Activated CD4-positive, alpha-beta memory T cell treated with anti-CD3 and anti-CD28 coated beads for 36 hours (primary cell): ENCODE measurements at regions of chr1 and their contacts with region 1.

Region 1: DNA sequence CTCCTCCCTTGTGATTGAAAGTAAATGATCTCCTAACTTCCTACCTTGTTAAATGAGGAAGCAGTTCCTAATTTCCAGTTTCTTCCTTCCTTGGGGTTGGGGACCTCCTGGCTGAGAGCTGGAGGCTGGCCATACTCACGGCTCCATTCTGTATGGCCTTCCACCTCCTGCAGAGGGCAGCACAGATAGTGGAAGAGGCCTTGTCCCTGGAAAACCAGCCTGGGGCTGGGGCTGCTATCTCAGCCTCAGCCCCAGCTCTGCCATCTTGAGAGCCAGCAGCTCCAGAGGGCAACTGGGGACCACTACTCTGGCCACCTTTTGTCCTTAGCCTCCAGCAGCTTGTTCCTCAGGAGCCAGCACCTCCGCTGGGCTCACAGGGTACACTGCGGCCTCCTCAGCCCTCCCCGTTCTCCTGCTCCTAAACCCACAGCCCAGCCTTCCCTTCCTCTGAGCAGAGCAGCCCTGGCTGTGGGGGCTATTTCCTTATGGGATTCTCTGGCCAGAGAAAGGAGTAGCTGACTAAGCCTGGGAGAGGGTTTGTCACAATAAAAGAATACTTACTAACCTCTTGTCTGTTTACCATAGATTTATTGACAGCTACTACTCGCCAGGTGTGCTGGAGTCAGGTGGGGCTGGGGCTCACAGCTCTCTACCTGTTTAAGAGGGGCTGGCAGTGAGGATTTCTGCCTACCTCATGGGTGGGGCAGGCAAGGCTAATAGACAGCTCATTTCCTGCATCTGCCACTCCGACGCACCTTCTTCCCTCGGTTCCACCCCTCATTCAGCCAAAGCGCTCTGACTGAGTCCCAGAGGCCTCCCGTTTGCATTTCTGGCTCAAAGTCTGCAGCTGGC is 6.3 kb downstream of the TMEM234 start:
- DNase-seq: peak; percentile 74
- H3K4me3 Mint-ChIP-seq: no peak overlapping the region
- H3K27ac Mint-ChIP-seq: peak overlapping the region; percentile 8
- H3K4me1 Mint-ChIP-seq: peaks cover 14% of the 10 kb centered on the region
- H3K27me3 Mint-ChIP-seq: no peaks in the 10 kb centered on the region

Region 2: GRCh38 chr1:31904339-31905092 is 311.3 kb before region 1 on chr1:
- CTCF ChIA-PET with region 1: no interaction called
- POLR2A ChIA-PET with region 1: no interaction called
- intact Hi-C with region 1: no loop called
- DNase-seq: peak; percentile 28
- H3K4me3 Mint-ChIP-seq: no peak overlapping the region
- H3K27ac Mint-ChIP-seq: peak overlapping the region; percentile 8
- H3K4me1 Mint-ChIP-seq: peaks cover 13% of the 10 kb centered on the region
- H3K27me3 Mint-ChIP-seq: no peaks in the 10 kb centered on the region

Region 3: GRCh38 chr1:32013386-32014198 is 202.3 kb before region 1 on chr1 and contains the start of gene KHDRBS1:
- CTCF ChIA-PET with region 1: no interaction called
- POLR2A ChIA-PET with region 1: no interaction called
- intact Hi-C with region 1: no loop called
- DNase-seq: peak; percentile 99
- H3K4me3 Mint-ChIP-seq: peak within 1 kb of the TSS; percentile 96
- H3K27ac Mint-ChIP-seq: peak within 1 kb of the TSS; percentile 91
- H3K4me1 Mint-ChIP-seq: peaks cover 23% of the 10 kb centered on the region
- H3K27me3 Mint-ChIP-seq: peaks cover 2% of the 10 kb centered on the region
- total RNA-seq, gene KHDRBS1: 200 to 203 TPM

Region 4: DNA sequence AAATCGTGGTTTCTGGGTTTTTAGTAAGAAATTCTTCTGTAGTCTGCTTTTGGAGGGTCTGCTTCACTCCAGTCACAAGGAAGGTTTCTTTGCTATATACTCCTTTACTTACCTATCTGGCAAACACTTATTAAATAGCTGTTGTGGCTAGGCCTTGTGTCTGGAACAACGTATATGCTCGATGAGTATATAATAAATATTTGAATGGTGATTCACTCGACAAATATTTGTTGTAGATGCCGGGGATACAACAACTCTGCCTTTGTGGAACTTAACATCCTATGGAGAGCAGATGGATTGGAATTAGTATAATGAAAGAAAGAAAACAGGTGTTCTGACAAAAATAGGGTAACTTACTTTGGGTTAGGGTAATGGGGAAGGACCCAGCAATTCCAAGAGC is 76.9 kb before region 1 on chr1:
- CTCF ChIA-PET with region 1: no interaction called
- POLR2A ChIA-PET with region 1: no interaction called
- intact Hi-C with region 1: no loop called
- DNase-seq: no peak
- H3K4me3 Mint-ChIP-seq: no peak overlapping the region
- H3K27ac Mint-ChIP-seq: no peak overlapping the region
- H3K4me1 Mint-ChIP-seq: peaks cover 52% of the 10 kb centered on the region
- H3K27me3 Mint-ChIP-seq: no peaks in the 10 kb centered on the region

Region 5: GRCh38 chr1:32200226-32201010 is 15.4 kb before region 1 on chr1 and contains the start of gene CCDC28B:
- CTCF ChIA-PET with region 1: interaction called, 31 read pairs
- POLR2A ChIA-PET with region 1: interaction called, 19 read pairs
- intact Hi-C with region 1: no loop called
- DNase-seq: peak; percentile 67
- H3K4me3 Mint-ChIP-seq: peak within 1 kb of the TSS; percentile 81
- H3K27ac Mint-ChIP-seq: peak within 1 kb of the TSS; percentile 80
- H3K4me1 Mint-ChIP-seq: peaks cover 51% of the 10 kb centered on the region
- H3K27me3 Mint-ChIP-seq: no peaks in the 10 kb centered on the region
- total RNA-seq, gene CCDC28B: 13.4 to 14.8 TPM

Region 6: GRCh38 chr1:32240140-32240951 is 24.5 kb after region 1 on chr1:
- CTCF ChIA-PET with region 1: interaction called, 27 read pairs
- POLR2A ChIA-PET with region 1: no interaction called
- intact Hi-C with region 1: no loop called
- DNase-seq: peak; percentile 71
- H3K4me3 Mint-ChIP-seq: peak overlapping the region; percentile 78
- H3K27ac Mint-ChIP-seq: no peak overlapping the region
- H3K4me1 Mint-ChIP-seq: peaks cover 19% of the 10 kb centered on the region
- H3K27me3 Mint-ChIP-seq: no peaks in the 10 kb centered on the region

Region 7: DNA sequence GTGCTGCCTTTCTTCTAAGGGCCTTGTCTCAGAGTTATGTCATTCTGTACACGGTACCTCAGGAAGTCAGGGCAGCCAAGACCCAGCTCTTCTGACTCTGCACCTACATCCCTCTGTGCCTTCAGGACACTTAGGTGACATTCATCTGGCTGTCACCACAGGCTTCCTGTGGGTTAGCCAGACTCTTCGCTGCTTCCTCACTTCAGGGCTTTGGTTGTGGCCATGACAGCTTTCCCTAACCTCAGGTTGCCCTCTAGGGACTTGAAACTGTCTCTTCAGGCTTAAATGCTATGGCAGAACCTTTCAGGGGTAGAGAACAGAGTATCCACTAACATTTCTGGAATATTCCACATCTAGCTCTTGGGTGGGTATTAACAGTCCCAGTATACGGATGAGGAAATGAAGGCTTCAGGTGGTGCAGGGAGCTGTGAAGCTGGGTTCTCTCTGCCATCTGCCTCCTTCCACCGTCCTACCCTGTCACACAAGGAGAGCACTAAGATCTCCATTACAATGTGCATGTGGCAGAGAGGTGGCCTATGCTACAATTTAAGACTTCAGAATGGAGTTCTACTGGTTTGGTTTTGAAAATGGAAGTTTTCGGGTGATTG is 156.4 kb after region 1 on chr1:
- CTCF ChIA-PET with region 1: interaction called, 19 read pairs
- POLR2A ChIA-PET with region 1: no interaction called
- intact Hi-C with region 1: no loop called
- DNase-seq: peak; percentile 63
- H3K4me3 Mint-ChIP-seq: no peak overlapping the region
- H3K27ac Mint-ChIP-seq: no peak overlapping the region
- H3K4me1 Mint-ChIP-seq: peaks cover 14% of the 10 kb centered on the region
- H3K27me3 Mint-ChIP-seq: no peaks in the 10 kb centered on the region

Region 8: GRCh38 chr1:32394141-32394889 is 178.5 kb after region 1 on chr1 and contains the start of gene BSDC1:
- CTCF ChIA-PET with region 1: interaction called, 17 read pairs
- POLR2A ChIA-PET with region 1: interaction called, 3 read pairs
- intact Hi-C with region 1: no loop called
- DNase-seq: peak; percentile 99
- H3K4me3 Mint-ChIP-seq: peak within 1 kb of the TSS; percentile 94
- H3K27ac Mint-ChIP-seq: peak within 1 kb of the TSS; percentile 90
- H3K4me1 Mint-ChIP-seq: peaks cover 22% of the 10 kb centered on the region
- H3K27me3 Mint-ChIP-seq: no peaks in the 10 kb centered on the region
- total RNA-seq, gene BSDC1: 32.1 to 33.2 TPM